ENCODE measurements at regions of chr3 and their contacts with region 1.

Region 1: GRCh38 chr3:111376320-111376719 is 165.7 kb upstream of the CD96 start:
- DNase-seq: no peak

Region 2: GRCh38 chr3:110070161-110070916 is 1306.0 kb before region 1 on chr3:
- intact Hi-C with region 1: loop called in 1 of 2 experiments (anchors 5 kb)
- DNase-seq: no peak

Region 3: DNA sequence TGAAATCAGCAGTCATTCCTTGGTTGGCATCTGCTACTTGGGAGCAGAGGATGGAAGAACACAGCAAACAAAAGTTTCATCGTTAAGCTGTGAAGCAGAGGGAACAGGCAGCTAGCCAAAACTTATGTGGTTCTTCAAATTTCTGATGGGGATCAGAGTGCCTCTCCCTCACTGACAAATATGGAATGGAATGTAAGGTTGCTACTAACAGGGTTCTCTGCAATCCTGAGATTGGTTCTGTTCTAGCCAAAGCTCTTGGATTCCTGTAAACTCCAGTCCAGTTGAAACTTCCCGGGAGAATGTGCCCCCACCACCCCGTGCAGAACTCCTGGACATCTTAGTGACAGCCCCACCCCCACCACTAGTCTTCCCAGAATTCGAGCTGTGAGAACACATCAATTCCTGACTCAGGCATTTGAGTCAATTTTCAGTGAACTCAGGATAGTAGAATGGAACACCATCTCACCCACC is 426.8 kb after region 1 on chr3:
- intact Hi-C with region 1: no loop called
- DNase-seq: peak; percentile 93

Region 4: DNA sequence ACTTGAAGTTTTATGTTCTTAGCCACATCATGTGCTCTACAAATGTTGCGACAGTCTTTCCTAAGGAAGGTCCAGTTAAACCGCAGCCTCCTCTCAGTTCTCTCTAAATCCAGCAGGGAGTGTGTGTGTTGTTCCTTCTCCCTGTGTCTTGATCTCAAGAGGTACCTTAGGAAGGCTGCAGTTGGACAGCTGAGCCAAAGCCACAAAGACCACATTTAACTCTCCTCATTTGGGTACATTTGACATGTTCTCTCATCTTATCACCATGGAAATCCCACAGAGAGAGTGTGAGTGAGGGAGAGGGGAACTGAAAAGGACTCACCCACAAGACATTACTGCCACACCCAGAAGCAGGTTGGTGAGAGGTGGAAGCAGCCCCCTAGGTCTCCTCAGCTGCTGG is 1390.9 kb after region 1 on chr3:
- intact Hi-C with region 1: no loop called
- DNase-seq: no peak